GM12878 (cell line): ENCODE measurements at regions of chr20 and their contacts with region 1.

Region 1: DNA sequence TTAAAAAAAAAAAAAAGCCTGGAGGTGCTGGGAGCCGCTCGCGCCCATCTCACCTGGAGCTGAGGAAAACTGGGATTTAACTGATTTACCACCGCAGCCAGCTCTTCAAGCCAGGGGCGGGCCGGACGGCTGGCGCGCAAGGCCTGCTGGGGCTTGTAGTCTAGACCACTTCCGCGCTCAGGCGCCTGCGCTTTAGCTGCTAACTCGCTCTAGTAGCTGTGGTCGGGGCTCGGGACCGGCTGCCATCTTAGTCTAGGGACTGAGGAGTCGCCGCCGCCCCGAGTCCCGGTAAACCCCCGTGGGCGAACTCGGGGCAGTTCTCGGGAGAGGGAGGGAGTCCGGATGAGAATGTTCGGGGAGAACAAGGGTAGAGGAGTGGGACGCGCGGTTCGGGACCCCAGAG is at the start of gene ITCH:
- DNase-seq: peak; percentile 56
- ATAC-seq: peak; percentile 98
- H3K4me3 ChIP-seq: peak within 1 kb of the TSS; percentile 99
- H3K27ac ChIP-seq: peak within 1 kb of the TSS; percentile 70
- H3K4me1 ChIP-seq: peaks cover 20% of the 10 kb centered on the region
- H3K27me3 ChIP-seq: no peaks in the 10 kb centered on the region
- CTCF ChIP-seq: no peak
- EP300 ChIP-seq: no peak
- POLR2A ChIP-seq: peak; percentile 92
- RAD21 ChIP-seq: no peak
- polyA plus RNA-seq, gene ITCH: 7.5 to 8.2 TPM

Region 2: GRCh38 chr20:34334654-34335407 is 28.2 kb before region 1 on chr20:
- CTCF ChIA-PET with region 1: interaction called, 15 read pairs
- POLR2A ChIA-PET with region 1: interaction called, 30 read pairs
- RAD21 ChIA-PET with region 1: interaction called, 21 read pairs
- SMC1A ChIA-PET with region 1: interaction called, 22 read pairs
- in situ Hi-C with region 1: no loop called
- intact Hi-C with region 1: no loop called
- DNase-seq: no peak
- ATAC-seq: no peak
- H3K4me3 ChIP-seq: no peak overlapping the region
- H3K27ac ChIP-seq: no peak overlapping the region
- H3K4me1 ChIP-seq: peaks cover 10% of the 10 kb centered on the region
- H3K27me3 ChIP-seq: no peaks in the 10 kb centered on the region
- CTCF ChIP-seq: no peak
- EP300 ChIP-seq: no peak
- POLR2A ChIP-seq: no peak
- RAD21 ChIP-seq: no peak

Region 3: GRCh38 chr20:34377072-34377847 is 14.2 kb after region 1 on chr20:
- CTCF ChIA-PET with region 1: no interaction called
- POLR2A ChIA-PET with region 1: interaction called, 7 read pairs
- RAD21 ChIA-PET with region 1: interaction called, 5 read pairs
- SMC1A ChIA-PET with region 1: interaction called, 10 read pairs
- in situ Hi-C with region 1: no loop called
- intact Hi-C with region 1: no loop called
- DNase-seq: peak; percentile 72
- ATAC-seq: peak; percentile 96
- H3K4me3 ChIP-seq: no peak overlapping the region
- H3K27ac ChIP-seq: no peak overlapping the region
- H3K4me1 ChIP-seq: peaks cover 15% of the 10 kb centered on the region
- H3K27me3 ChIP-seq: no peaks in the 10 kb centered on the region
- CTCF ChIP-seq: no peak
- EP300 ChIP-seq: peak; percentile 30 to 40; a peak in 1 of 4 replicates
- POLR2A ChIP-seq: no peak
- RAD21 ChIP-seq: no peak

Region 4: DNA sequence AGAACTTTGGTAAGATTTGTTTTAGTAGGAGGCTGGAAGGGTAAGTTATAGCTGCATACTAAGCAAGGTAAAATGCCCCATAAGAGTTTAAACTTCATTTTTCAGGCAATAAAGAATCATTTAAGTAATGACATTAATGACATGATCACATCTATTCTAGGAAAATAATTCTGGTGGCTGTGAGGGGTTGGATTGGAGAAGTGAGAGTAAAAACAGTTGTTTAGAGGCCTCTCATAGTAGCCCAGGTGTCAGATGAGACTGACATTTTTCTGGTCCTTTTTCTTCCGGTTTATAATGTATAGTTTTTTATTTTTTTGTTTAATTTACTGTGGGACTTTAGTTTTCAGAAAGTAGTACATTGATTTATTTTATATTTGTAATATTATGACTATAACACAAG is 40.8 kb after region 1 on chr20:
- CTCF ChIA-PET with region 1: no interaction called
- POLR2A ChIA-PET with region 1: interaction called, 6 read pairs
- RAD21 ChIA-PET with region 1: interaction called, 12 read pairs
- SMC1A ChIA-PET with region 1: interaction called, 6 read pairs
- in situ Hi-C with region 1: no loop called
- intact Hi-C with region 1: no loop called
- DNase-seq: no peak
- ATAC-seq: peak; percentile 81
- H3K4me3 ChIP-seq: peak overlapping the region; percentile 6; the same call in 1 of the 2 replicates
- H3K27ac ChIP-seq: peak overlapping the region; percentile 76
- H3K4me1 ChIP-seq: peaks cover 30% of the 10 kb centered on the region
- H3K27me3 ChIP-seq: no peaks in the 10 kb centered on the region
- CTCF ChIP-seq: no peak
- EP300 ChIP-seq: no peak
- POLR2A ChIP-seq: no peak
- RAD21 ChIP-seq: no peak

Region 5: DNA sequence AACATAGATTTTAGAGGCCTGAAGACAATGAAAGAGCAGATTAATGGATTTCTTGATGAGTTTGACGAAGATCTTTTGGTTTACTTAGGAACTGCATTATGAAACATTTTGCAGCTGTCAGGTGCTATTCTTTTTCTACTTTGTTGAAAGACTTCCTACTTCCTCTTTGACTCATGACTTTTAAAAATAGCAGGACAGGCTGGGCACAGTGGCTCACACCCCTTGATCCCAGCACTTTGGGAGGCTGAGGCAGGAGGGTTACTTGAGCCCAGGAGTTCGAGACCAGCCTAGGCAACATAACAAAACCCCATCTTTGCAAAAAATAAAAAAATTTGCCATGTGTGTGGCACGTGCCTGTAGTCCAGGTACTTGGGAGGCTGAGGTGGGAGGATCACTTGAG is 52.0 kb after region 1 on chr20:
- CTCF ChIA-PET with region 1: no interaction called
- POLR2A ChIA-PET with region 1: interaction called, 7 read pairs
- RAD21 ChIA-PET with region 1: interaction called, 11 read pairs
- SMC1A ChIA-PET with region 1: interaction called, 9 read pairs
- in situ Hi-C with region 1: no loop called
- intact Hi-C with region 1: loop called (anchors 5 kb)
- DNase-seq: peak; percentile 39
- ATAC-seq: peak; percentile 85
- H3K4me3 ChIP-seq: no peak overlapping the region
- H3K27ac ChIP-seq: peak overlapping the region; percentile 76
- H3K4me1 ChIP-seq: peaks cover 20% of the 10 kb centered on the region
- H3K27me3 ChIP-seq: no peaks in the 10 kb centered on the region
- CTCF ChIP-seq: no peak
- EP300 ChIP-seq: peak; percentile 40 to 46; a peak in 1 of 4 replicates
- POLR2A ChIP-seq: no peak
- RAD21 ChIP-seq: no peak

Region 6: DNA sequence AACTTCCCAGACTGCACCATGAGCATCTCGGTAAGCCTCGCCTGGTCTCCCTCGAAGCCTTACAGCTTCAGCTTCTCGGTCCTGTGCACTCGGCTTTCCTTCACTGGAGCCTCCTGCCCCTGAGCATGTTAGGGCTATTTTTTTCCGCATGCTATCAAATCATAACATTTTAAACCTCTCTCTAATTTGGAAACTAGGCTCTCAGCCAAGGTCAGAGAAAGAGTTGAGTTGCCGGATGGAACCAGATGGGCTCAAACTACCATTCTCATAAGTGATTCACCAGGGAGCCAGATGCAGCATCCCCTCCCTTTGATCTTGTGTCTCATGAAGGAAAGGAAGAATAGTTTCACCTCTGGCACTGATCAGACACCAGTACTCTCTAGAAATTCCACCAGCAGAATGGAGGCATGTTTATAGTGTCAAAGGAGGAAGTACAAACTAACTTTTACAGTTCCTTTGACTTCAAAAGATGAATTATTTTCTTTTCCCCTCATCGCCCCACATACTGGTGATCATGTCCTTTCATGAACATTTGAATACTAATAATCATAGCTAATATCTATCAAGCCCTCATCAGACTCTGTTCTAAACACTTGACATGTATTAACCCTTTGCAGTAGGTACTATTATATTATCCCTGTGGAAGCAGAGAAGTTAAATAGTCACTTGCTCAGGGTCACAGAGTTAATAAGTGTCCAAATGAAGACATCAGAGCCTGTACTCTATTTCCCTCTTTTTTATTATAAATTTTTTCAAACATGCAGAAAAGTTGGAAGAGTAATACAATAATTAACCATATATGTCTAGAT is 242.1 kb after region 1 on chr20:
- CTCF ChIA-PET with region 1: no interaction called
- POLR2A ChIA-PET with region 1: no interaction called
- RAD21 ChIA-PET with region 1: no interaction called
- SMC1A ChIA-PET with region 1: no interaction called
- in situ Hi-C with region 1: no loop called
- intact Hi-C with region 1: no loop called
- DNase-seq: no peak
- ATAC-seq: no peak
- H3K4me3 ChIP-seq: no peak overlapping the region
- H3K27ac ChIP-seq: no peak overlapping the region
- H3K4me1 ChIP-seq: no peaks in the 10 kb centered on the region; the same call in 1 of the 2 replicates
- H3K27me3 ChIP-seq: no peaks in the 10 kb centered on the region
- CTCF ChIP-seq: no peak
- EP300 ChIP-seq: no peak
- POLR2A ChIP-seq: no peak
- RAD21 ChIP-seq: no peak